ENCODE measurements at regions of chr4 and their contacts with region 1.

Region 1: DNA sequence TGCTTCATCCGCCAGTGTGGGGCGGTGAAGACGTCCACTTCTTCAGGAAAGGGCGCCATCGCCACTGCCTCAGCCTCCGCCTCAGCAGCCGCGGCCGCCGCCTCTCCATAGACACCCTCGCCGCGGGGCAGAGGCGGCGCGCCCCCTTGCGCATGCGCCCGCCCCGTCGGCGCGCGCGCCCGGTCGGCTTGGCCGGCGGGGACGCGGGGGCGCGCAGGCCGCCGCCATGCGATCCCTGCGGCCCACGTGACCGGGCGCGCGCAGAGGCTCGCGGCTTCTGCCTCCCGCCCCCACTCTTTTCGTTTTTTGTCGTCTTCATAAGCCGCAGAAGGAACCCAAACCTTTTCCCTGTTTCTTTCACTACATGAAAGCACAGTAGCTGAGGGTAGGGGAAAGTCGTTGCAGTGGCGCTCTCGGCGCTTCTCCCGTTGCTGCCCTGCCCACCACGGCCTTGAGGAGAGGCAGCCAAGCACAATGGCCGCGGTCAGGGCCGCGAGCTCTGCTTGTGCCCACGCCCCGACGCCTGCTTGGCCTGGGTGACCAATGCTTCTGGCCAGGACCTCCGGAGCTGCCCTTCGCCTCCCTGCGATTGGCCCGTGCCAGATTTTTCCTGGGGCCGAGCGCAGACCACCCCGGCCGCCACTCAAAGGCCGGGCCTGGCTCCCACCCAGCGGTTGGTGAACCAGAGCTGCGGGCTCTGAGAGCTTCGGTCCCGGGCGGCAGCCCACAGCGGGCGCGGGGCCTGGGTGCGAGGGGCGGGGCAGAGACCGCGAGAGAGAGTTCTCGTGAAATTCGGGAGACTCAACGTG is at the start of gene FBXL5:
- DNase-seq: peak; percentile 84 to 89 (median 86)
- ATAC-seq: peak; percentile 96
- H3K4me3 ChIP-seq: peak within 1 kb of the TSS; percentile 80
- H3K4me1 ChIP-seq: peaks cover 30% of the 10 kb centered on the region
- CTCF ChIP-seq: no peak
- total RNA-seq, gene FBXL5: 44.8 to 104 (median 60.4) TPM

Region 2: GRCh38 chr4:15444872-15445547 is 210.4 kb before region 1 on chr4:
- intact Hi-C with region 1: no loop called
- DNase-seq: no peak
- ATAC-seq: no peak
- H3K4me3 ChIP-seq: no peak overlapping the region
- H3K4me1 ChIP-seq: no peaks in the 10 kb centered on the region
- CTCF ChIP-seq: no peak

Region 3: GRCh38 chr4:15479089-15479912 is 176.1 kb before region 1 on chr4:
- intact Hi-C with region 1: loop called in 1 of 2 experiments (anchors 10 kb)
- DNase-seq: peak in 1 of 3 donors; percentile 29
- ATAC-seq: peak; percentile 73
- H3K4me3 ChIP-seq: no peak overlapping the region
- H3K4me1 ChIP-seq: no peaks in the 10 kb centered on the region
- CTCF ChIP-seq: peak; percentile 17